ENCODE measurements at regions of chr2 and their contacts with region 1.

Region 1: GRCh38 chr2:97656905-97657587 is 6.8 kb downstream of the ACTR1B start:
- DNase-seq: no peak
- ATAC-seq: no peak
- H3K4me3 Mint-ChIP-seq: no peak overlapping the region
- H3K27ac Mint-ChIP-seq: peak overlapping the region in 3 of 10 donors; percentile 37 to 56 (median 46)
- H3K4me1 Mint-ChIP-seq: peaks cover 13 to 23% (median 17%) of the 10 kb centered on the region in 4 donors
- H3K27me3 Mint-ChIP-seq: no peaks in the 10 kb centered on the region

Region 2: DNA sequence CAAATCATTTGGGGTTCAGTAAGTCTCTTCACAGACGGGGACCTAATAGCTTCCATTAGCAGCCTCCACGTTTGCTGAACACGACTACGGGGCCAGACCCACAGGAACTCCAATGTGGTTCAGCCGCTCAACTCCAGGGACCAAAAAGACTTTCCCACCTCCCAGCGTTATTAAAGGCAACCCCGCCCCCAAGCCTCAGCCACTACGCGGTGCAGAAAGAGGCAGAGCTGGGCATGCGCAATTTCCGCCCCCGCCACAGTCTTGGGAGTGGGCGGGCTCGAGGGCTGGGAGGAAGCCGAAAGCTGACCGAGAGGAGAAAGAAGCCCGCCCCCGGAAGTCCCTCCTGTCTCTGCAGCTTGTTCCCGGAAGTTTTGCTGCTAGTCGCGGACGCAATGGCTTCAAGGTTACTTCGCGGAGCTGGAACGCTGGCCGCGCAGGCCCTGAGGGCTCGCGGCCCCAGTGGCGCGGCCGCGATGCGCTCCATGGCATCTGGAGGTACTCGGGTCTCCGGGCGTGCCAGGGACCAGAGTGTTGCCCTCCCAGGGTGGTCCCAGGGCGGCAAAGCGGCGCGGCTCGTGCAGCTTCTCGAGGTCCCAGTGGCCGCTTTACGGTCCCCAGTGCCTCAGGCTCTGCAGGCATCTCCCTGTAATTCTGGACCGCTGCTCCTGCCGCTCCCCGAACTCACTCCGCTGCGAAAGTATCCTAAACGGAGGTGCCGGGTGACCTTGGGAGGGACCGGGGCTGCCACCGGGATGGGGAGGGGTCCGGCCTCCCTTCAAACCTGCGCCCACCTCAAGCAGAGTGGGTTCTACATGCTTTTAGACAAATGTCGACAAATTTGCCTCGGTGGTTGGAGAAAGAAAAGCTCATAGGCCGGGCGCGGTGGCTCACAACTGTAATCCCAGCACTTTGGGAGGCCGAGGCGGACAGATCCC is 11.1 kb before region 1 on chr2 and contains the start of gene COX5B:
- POLR2A ChIA-PET with region 1: interaction called, 170 read pairs
- DNase-seq: peak; percentile 93 to 99 (median 98)
- ATAC-seq: peak; percentile 92 to 95
- H3K4me3 Mint-ChIP-seq: peak within 1 kb of the TSS; percentile 93 to 99 (median 98)
- H3K27ac Mint-ChIP-seq: peak within 1 kb of the TSS; percentile 92 to 99 (median 98)
- H3K4me1 Mint-ChIP-seq: peaks cover 17 to 27% (median 23%) of the 10 kb centered on the region in 4 donors
- H3K27me3 Mint-ChIP-seq: no peaks in the 10 kb centered on the region
- polyA plus RNA-seq, gene COX5B: 321 to 373 (median 350) TPM

Measured in naive thymus-derived CD8-positive, alpha-beta T cell (primary cell).